ENCODE measurements at regions of chr15 and their contacts with region 1.

Region 1: DNA sequence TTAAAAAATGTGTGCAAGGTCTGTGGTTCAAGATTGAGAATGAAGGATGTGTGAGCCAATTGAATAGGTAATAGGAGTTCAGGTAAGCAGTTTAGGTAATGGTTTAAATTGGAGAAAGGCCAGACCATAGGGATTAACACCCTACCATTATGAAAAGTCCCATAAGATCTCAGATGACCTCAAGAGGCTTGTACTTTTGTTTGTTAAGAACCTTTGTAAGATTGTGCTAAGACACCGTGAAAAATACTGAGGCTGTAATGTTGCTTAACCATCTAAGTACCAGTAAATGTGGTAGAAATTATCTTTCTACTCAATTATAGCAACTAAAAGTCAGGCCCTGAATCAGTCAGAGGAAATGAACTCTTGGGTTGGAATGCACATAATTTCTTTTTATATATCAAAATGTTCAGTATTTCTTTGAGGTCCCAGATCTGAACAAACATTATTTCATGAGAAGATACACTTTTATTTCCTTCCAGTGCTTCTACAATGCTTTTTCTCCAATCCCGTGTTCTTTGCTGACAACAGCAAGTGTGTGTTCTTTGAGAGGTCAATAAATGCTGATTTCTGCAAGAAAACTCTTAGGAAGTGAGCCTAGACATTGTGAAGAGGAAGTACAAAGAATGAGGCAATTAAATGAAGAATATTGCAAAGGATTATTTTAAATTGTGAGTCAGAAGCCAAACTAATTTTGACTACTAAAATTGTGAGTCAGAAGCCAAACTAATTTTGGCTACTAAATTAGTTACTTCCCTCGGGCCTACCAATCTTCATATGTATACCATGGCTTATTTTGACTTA is 66.4 kb downstream of the TCF12 start:
- DNase-seq: no peak
- ATAC-seq: peak; percentile 21
- H3K4me3 Mint-ChIP-seq: no peak overlapping the region
- H3K27ac Mint-ChIP-seq: peak overlapping the region; percentile 57
- H3K4me1 Mint-ChIP-seq: peaks cover 69% of the 10 kb centered on the region
- H3K27me3 Mint-ChIP-seq: no peaks in the 10 kb centered on the region
- CTCF ChIP-seq: no peak

Region 2: GRCh38 chr15:56582785-56583184 is 402.1 kb before region 1 on chr15:
- CTCF ChIA-PET with region 1: no interaction called
- POLR2A ChIA-PET with region 1: no interaction called
- intact Hi-C with region 1: no loop called
- DNase-seq: no peak
- ATAC-seq: no peak
- H3K4me3 Mint-ChIP-seq: no peak overlapping the region
- H3K27ac Mint-ChIP-seq: no peak overlapping the region
- H3K4me1 Mint-ChIP-seq: no peaks in the 10 kb centered on the region
- H3K27me3 Mint-ChIP-seq: no peaks in the 10 kb centered on the region
- CTCF ChIP-seq: no peak

Region 3: GRCh38 chr15:56931639-56932508 is 53.0 kb before region 1 on chr15:
- CTCF ChIA-PET with region 1: no interaction called
- POLR2A ChIA-PET with region 1: no interaction called
- intact Hi-C with region 1: loop called (anchors 10 kb)
- DNase-seq: no peak
- ATAC-seq: no peak
- H3K4me3 Mint-ChIP-seq: no peak overlapping the region
- H3K27ac Mint-ChIP-seq: no peak overlapping the region
- H3K4me1 Mint-ChIP-seq: peaks cover 71% of the 10 kb centered on the region
- H3K27me3 Mint-ChIP-seq: no peaks in the 10 kb centered on the region
- CTCF ChIP-seq: no peak

Region 4: DNA sequence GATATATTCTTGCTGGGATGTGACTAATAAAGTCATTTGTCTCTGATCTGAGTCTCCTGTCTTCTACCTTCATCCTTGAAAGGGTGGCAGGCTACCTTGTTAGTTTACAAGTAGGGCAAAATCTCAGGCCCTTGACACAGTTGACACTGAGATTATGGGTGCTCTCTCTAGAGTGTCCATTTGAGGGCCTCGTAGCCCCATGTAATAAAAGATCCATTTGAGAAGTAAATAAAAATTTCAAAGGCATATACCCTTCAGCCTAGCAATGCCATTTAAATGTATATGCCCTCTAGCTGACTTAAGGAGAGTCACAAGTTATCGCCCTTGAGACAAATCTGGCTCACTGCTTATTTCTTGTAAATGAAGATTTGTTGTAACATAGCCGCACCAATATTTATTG is 32.1 kb after region 1 on chr15:
- CTCF ChIA-PET with region 1: no interaction called
- POLR2A ChIA-PET with region 1: no interaction called
- intact Hi-C with region 1: no loop called
- DNase-seq: no peak
- ATAC-seq: peak; percentile 49
- H3K4me3 Mint-ChIP-seq: no peak overlapping the region
- H3K27ac Mint-ChIP-seq: no peak overlapping the region
- H3K4me1 Mint-ChIP-seq: peaks cover 30% of the 10 kb centered on the region
- H3K27me3 Mint-ChIP-seq: no peaks in the 10 kb centered on the region
- CTCF ChIP-seq: no peak

Measured in activated CD8-positive, alpha-beta T cell treated with anti-CD3 and anti-CD28 coated beads for 36 hours (primary cell).